Endothelial cell of umbilical vein (primary cell): ENCODE measurements at regions of chr3 and their contacts with region 1.

Region 1: GRCh38 chr3:58414538-58415197 is 19.0 kb downstream of the PDHB start:
- DNase-seq: peak; percentile 79
- H3K4me3 ChIP-seq: no peak overlapping the region
- H3K27ac ChIP-seq: no peak overlapping the region
- H3K4me1 ChIP-seq: no peaks in the 10 kb centered on the region
- H3K27me3 ChIP-seq: no peaks in the 10 kb centered on the region
- CTCF ChIP-seq: peak; percentile 64
- POLR2A ChIP-seq: no peak

Region 2: DNA sequence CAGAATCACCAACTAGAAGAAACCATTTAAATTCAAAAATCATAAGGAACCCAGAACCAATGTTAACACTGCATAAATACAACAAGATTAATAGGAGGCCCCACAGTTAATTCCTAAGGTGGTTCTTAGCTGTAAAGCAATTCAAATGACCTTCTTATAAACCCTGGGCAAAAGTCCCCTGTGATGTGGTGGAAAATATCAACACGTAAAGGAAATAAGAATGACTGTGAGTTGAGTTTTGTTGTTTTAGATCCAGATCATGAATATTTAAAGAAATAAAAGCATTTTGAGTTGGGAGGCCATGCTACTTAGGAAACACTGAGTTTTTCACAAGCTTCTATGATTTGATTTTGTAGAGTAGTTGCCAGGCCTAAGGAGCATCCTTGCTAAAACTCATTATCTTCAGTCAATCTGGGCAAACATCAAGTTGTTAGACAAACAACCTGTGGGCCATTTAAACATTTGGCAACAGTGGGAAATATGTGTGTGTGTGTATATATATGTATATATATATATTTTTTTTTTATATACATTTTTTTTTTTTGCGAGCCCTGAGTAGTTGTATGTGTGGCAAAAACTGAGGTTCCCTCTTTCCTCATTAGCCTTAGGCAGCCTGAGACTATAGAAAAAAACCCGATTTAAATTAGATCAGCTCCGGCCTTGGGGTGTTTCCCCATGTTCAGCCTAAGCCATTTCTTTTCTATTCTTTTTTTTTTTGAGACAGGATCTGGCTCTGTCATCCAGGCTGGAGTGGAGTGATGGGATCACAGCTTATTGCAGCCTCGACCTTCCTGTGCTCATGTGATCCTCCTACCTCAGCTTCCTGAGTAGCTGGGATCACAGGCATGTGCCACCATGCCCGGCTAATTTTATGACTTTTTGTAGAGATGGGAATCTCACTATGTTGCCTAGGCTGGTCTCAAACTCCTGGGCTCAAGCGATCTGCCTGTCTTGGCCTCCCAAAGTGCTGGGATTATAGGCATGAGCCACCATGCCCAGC is 90.0 kb before region 1 on chr3:
- CTCF ChIA-PET with region 1: interaction called, 44 read pairs
- POLR2A ChIA-PET with region 1: no interaction called
- dilution Hi-C with region 1: no loop called
- intact Hi-C with region 1: loop called (anchors 1 kb)
- DNase-seq: peak; percentile 89
- H3K4me3 ChIP-seq: no peak overlapping the region
- H3K27ac ChIP-seq: peak overlapping the region; percentile 14
- H3K4me1 ChIP-seq: peaks cover 19% of the 10 kb centered on the region
- H3K27me3 ChIP-seq: no peaks in the 10 kb centered on the region
- CTCF ChIP-seq: no peak
- POLR2A ChIP-seq: no peak

Region 3: DNA sequence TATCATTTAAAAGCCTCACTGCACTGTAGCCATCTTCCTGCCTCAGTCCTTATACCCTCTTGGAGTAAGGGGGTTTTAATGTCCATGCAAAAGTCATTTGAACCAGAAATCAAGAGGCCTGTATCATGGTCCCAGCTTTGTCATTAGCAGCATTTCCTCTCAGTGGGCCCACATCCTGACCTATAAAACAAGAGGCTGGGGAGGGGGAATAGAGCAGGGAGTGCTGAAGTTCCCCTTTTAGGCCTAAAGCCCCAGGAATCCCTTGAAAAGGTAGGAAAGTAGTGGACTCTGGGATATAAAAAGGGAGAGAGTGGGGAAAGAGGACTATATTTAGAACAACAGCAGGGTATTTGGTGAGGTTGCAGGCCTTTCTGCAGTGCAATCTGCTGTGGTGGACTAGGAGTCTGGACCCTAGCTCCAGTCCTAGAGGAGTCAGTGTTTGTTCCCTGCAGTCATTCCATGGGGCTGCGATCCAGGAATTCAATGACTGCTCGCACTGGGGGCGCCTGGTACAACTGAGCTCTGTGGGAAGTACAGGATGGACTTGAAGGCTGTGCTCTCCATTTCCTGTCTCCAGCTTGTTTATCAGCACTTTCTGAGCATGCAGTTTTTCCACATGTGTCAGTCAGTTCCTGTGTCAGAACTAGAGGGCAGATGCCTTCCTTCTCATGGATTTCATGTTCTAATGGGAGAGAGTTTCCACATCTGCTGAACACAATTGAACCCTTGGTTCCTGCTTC is 27.9 kb before region 1 on chr3:
- CTCF ChIA-PET with region 1: interaction called, 11 read pairs
- POLR2A ChIA-PET with region 1: no interaction called
- dilution Hi-C with region 1: no loop called
- intact Hi-C with region 1: no loop called
- DNase-seq: peak; percentile 95
- H3K4me3 ChIP-seq: no peak overlapping the region
- H3K27ac ChIP-seq: peak overlapping the region; percentile 71
- H3K4me1 ChIP-seq: peaks cover 40% of the 10 kb centered on the region
- H3K27me3 ChIP-seq: no peaks in the 10 kb centered on the region
- CTCF ChIP-seq: peak in 1 of 2 donors; percentile 1
- POLR2A ChIP-seq: peak; percentile 57